Calu3 (cell line): ENCODE measurements at regions of chr2 and their contacts with region 1.

Region 1: DNA sequence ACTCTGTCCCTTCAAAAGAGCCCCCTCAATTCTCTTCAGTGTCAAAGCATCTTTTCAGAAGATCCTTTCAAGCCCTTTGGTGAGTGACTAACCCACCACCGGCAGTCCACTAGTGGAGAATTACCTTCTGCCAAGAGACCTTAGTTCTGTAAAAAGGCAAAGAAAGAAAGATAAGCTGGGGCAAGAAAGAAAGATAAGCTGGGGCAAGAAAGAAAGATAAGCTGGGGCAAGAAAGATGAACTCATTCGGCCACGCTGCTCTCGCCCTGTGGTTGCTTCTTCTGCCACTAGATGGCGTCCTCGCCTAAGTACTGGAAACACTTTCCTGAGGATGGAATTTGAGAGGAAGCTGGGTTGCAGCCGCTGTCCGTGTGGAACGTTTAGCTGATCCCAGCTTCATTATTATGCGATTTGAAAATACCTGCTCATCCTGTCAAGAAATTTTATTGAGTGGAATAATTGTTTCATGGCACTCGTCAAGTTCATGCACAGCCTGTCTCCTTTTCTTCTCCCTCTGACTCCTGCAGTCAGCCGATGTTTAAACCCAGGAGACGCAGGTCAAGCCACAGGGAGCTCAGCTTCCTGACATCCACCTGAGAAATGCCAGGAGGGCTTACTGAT is 17.3 kb upstream of the ANXA4 start:
- DNase-seq: peak; percentile 89
- H3K4me3 Mint-ChIP-seq: no peak overlapping the region
- H3K27ac Mint-ChIP-seq: no peak overlapping the region
- H3K4me1 Mint-ChIP-seq: peaks cover 23% of the 10 kb centered on the region
- H3K27me3 Mint-ChIP-seq: no peaks in the 10 kb centered on the region
- CTCF ChIP-seq: peak; percentile 89

Region 2: DNA sequence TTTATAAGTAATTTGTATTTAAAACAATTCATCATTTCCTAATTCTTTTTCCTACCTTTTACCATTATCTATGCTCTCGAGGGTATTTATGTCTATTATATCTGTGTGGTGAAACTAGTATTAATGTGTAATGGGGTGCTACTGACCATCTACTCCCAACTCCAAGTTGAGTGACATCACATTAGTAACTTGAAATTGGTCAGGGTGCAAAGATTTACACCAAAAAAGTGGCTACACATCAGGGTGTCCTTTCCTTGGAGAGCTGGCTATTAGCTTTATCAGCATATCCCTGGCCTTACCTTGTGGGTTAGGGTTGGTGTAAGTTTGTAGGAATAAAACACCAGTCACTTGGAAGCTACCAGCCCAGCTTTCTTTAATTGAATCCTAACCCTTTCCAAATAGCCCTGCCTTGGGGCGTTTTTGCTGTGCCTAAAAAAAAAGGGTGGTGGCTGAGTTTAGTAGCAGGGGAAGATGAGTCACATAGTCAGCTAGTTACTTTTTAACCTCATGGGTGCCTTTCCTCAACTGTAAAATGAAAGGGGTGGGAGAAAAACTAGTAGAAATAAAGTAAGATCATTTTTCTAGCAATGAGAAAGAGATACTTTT is 31.3 kb after region 1 on chr2:
- CTCF ChIA-PET with region 1: interaction called, 13 read pairs
- intact Hi-C with region 1: no loop called
- DNase-seq: peak; percentile 81
- H3K4me3 Mint-ChIP-seq: peak overlapping the region; percentile 29
- H3K27ac Mint-ChIP-seq: peak overlapping the region; percentile 32
- H3K4me1 Mint-ChIP-seq: peaks cover 59% of the 10 kb centered on the region
- H3K27me3 Mint-ChIP-seq: no peaks in the 10 kb centered on the region
- CTCF ChIP-seq: no peak

Region 3: DNA sequence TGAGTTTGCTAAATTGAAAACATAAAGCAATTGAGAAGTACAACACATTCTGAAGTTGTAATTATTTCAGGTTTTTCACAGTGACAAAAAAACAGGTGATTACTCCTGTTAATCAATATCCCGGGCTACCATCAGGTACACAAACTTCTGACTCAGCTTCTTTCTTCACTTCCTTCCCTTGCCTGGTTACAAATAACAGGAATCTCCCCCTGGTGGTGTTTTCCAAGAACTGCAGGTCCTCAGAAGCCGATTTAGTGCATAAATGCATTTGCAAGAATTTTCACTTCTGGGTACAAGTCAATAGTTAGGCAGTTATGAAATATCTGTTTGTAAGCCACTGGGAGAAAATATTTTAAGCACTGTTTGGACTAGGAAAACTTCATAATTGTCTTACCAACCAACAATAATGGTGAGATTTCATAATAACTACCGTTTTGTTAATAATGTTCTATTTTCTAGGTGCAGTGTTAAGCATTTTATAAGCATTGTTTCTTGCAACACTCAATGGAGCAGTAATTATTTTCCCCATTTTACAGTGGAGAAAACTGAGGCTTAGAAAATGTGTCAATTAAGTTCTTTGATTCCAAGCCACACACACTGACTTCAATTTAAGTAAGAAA is 92.4 kb after region 1 on chr2:
- CTCF ChIA-PET with region 1: interaction called, 60 read pairs
- intact Hi-C with region 1: loop called (anchors 1 kb)
- DNase-seq: peak; percentile 74
- H3K4me3 Mint-ChIP-seq: no peak overlapping the region
- H3K27ac Mint-ChIP-seq: peak overlapping the region; percentile 31
- H3K4me1 Mint-ChIP-seq: peaks cover 22% of the 10 kb centered on the region
- H3K27me3 Mint-ChIP-seq: no peaks in the 10 kb centered on the region
- CTCF ChIP-seq: peak; percentile 74

Region 4: DNA sequence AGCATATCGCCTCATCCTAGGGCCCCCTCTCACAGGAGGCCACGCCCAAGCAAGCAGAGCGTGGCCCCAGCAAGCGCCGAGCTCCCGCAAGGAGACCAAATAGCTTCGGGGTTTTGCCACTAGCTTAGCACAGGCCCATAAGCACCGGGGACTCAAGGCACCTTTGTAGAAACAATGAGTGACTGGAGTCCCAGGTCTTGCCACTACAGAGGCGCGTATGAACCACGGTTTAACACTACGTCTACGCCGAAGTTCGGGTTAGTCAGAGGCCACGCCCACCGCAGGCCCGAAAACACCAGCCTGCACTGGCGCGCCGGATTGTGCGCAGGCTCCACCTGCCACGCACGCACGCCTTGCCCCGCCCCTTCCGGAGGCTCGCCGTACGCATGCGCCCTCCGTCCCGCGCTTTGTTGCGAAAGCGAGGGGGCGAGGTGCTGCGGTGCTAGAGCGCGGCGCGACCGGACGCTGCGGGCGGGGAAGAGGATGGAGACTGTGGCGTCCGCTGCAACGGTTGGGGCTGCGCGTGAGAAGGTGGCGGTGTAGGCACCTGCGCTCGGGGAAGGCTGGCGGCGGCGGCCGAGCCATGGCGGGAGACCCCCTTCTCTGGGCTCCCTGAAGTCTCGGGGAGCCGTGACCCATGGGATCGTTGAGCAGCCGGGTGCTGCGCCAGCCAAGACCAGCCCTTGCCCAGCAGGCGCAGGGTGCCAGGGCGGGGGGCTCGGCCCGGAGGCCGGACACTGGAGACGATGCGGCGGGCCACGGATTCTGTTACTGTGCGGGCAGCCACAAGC is 104.8 kb after region 1 on chr2 and contains the start of gene GMCL1:
- CTCF ChIA-PET with region 1: interaction called, 15 read pairs
- intact Hi-C with region 1: no loop called
- DNase-seq: peak; percentile 98
- H3K4me3 Mint-ChIP-seq: peak within 1 kb of the TSS; percentile 98
- H3K27ac Mint-ChIP-seq: peak within 1 kb of the TSS; percentile 94
- H3K4me1 Mint-ChIP-seq: peaks cover 34% of the 10 kb centered on the region
- H3K27me3 Mint-ChIP-seq: no peaks in the 10 kb centered on the region
- CTCF ChIP-seq: no peak
- total RNA-seq, gene GMCL1: 63.8 and 76.4 TPM in 2 replicates

Region 5: DNA sequence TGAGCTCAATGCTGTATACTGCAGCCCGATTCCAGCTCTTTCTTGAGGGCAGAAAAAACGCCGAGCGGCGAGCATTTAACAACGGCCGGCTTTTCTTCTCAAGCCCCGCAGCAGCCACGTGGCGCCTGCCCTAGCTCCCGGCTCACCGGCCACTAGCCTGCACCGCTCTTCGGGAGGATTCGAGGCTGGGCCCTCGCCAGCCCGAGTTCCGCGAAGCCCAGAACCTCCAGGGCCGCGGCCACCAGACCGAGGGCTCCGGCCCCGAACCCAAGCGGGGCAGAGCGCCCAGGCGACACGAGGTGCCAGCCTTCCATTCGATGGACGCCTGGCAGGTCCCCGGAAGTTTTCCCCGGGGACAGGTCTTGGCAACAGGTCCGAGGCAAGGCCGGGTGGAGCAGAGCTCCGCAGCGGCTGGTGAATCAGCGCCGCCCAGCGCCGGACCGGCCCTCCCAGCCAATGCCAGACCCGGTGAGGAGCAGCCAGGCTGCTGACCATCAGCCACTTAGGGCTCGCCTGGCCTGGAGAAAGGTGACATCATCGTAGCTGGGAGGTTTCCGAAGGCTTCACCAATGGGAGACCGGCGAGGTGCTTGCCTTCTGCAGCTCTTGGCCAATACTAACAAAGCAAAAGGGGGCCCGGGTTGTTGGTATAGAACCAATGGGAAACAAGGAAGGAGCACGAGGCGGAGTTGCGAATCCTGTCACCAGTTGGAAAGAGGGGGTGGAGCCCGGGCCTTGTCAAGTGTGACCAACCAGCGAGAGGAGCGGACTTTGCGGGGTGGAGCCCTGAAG is 189.7 kb after region 1 on chr2:
- CTCF ChIA-PET with region 1: interaction called, 5 read pairs
- intact Hi-C with region 1: loop called (anchors 5 kb)
- DNase-seq: peak; percentile 99
- H3K4me3 Mint-ChIP-seq: peak overlapping the region; percentile 76
- H3K27ac Mint-ChIP-seq: peak overlapping the region; percentile 98
- H3K4me1 Mint-ChIP-seq: peaks cover 27% of the 10 kb centered on the region
- H3K27me3 Mint-ChIP-seq: no peaks in the 10 kb centered on the region
- CTCF ChIP-seq: no peak